Endothelial cell of umbilical vein (primary cell): ENCODE measurements at regions of chr1 and their contacts with region 1.

Region 1: GRCh38 chr1:9942939-9943788 is at the starts of genes LZIC and NMNAT1:
- DNase-seq: peak; percentile 94
- H3K4me3 ChIP-seq: peak within 1 kb of the TSS; percentile 79 to 99 (median 95)
- H3K27ac ChIP-seq: peak within 1 kb of the TSS; percentile 91
- H3K4me1 ChIP-seq: peaks cover 4% of the 10 kb centered on the region
- H3K27me3 ChIP-seq: no peaks in the 10 kb centered on the region
- CTCF ChIP-seq: no peak
- POLR2A ChIP-seq: peak; percentile 96
- total RNA-seq, gene LZIC: 22.7 and 23.4 TPM in 2 replicates
- total RNA-seq, gene NMNAT1: 7.4 and 9.8 TPM in 2 replicates

Region 2: GRCh38 chr1:9890224-9890731 is 52.9 kb before region 1 on chr1:
- CTCF ChIA-PET with region 1: interaction called, 29 read pairs
- POLR2A ChIA-PET with region 1: interaction called, 4 read pairs
- dilution Hi-C with region 1: no loop called
- intact Hi-C with region 1: loop called (anchors 1 kb)
- DNase-seq: peak; percentile 63
- H3K4me3 ChIP-seq: no peak overlapping the region
- H3K27ac ChIP-seq: peak overlapping the region; percentile 52
- H3K4me1 ChIP-seq: peaks cover 43% of the 10 kb centered on the region
- H3K27me3 ChIP-seq: no peaks in the 10 kb centered on the region
- CTCF ChIP-seq: no peak
- POLR2A ChIP-seq: no peak